H1 (cell line): ENCODE measurements at regions of chr2 and their contacts with region 1.

Region 1: DNA sequence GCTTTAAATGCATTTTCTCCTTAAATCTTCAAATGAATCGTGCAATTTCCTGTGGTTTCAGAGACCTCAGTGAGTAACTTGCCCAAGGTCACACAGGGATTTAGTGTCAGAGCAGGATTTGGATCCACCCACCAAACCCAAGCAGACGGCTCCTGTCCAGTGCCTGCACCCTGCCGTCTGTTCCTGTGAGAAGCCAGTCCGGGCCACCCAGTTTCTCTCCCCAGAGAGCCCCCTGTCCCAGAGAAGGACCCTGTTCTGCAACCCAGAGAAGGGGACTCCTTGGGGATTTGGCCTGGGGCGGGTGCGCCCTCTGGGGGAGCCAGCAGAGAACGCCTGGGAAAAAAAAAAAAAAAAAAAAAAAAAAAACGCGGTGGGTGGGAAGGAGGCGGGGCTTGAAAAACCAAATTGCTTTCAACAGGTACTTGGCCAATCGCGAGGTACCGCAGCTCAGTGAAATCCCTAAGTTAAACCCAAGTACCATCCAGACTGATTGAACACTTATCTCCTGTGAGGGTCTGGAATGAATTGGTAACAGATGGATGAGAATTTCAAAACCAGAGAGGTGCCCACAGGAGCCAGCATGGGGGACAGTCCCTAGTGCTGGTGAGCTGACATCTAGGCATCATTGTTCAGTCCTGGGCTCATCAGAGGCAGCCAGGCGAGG is 30.9 kb upstream of the REEP1 start:
- DNase-seq: peak; percentile 41 to 78
- H3K4me3 ChIP-seq: peak overlapping the region in 1 of 4 experiments; percentile 30; a peak in 1 of 8 replicates
- H3K27ac ChIP-seq: no peak overlapping the region
- H3K4me1 ChIP-seq: no peaks in the 10 kb centered on the region; a peak in 1 of 7 replicates
- H3K27me3 ChIP-seq: no peaks in the 10 kb centered on the region
- CTCF ChIP-seq: peak; percentile 43 to 68 (median 48)
- EP300 ChIP-seq: no peak
- POLR2A ChIP-seq: no peak
- RAD21 ChIP-seq: peak; percentile 81 to 84

Region 2: DNA sequence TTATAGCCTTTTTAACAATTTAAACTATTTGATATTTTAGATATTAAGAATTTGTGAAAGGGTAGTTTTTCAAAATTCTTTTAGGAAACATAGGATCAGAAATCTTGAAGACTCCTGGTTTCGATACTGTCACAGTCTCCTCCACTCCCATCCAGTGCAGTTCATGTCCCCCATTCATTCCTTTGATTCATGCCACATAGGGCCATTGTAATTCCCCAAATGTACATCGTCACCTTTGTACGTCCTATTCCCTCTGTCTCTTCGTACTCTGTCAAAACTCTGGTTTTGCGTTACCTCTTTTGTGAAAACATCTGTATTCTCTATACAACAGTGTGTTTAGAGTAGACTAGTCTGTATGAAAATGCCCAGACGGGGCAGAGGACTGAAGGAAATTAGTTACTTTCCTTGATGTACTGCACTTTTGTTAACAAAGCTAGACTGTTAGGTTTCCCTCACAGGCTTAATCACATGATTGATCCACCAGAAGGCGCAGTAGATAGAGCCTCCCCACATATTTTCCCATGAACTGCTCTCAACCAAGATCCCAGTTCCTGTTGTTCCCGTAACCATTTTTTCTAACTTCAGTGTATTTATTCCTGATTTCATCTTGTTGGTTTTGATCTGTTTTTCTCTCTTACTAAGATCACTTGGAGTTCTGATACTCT is 166.5 kb before region 1 on chr2:
- CTCF ChIA-PET with region 1: interaction called, 13 read pairs
- POLR2A ChIA-PET with region 1: no interaction called
- DNase-seq: no peak
- H3K4me3 ChIP-seq: peak overlapping the region in 1 of 4 experiments; percentile 10; a peak in 1 of 8 replicates
- H3K27ac ChIP-seq: no peak overlapping the region
- H3K4me1 ChIP-seq: peaks cover 0 to 6% (median 2%) of the 10 kb centered on the region in 4 experiments; a peak in 3 of 7 replicates
- H3K27me3 ChIP-seq: no peaks in the 10 kb centered on the region
- CTCF ChIP-seq: no peak
- EP300 ChIP-seq: no peak
- POLR2A ChIP-seq: no peak
- RAD21 ChIP-seq: no peak

Region 3: GRCh38 chr2:86213699-86214502 is 154.4 kb before region 1 on chr2:
- CTCF ChIA-PET with region 1: interaction called, 14 read pairs
- POLR2A ChIA-PET with region 1: no interaction called
- DNase-seq: no peak
- H3K4me3 ChIP-seq: no peak overlapping the region
- H3K27ac ChIP-seq: no peak overlapping the region
- H3K4me1 ChIP-seq: no peaks in the 10 kb centered on the region
- H3K27me3 ChIP-seq: peaks cover 0 to 1% (median 0%) of the 10 kb centered on the region in 4 experiments; a peak in 1 of 7 replicates
- CTCF ChIP-seq: no peak
- EP300 ChIP-seq: no peak
- POLR2A ChIP-seq: no peak
- RAD21 ChIP-seq: no peak

Region 4: DNA sequence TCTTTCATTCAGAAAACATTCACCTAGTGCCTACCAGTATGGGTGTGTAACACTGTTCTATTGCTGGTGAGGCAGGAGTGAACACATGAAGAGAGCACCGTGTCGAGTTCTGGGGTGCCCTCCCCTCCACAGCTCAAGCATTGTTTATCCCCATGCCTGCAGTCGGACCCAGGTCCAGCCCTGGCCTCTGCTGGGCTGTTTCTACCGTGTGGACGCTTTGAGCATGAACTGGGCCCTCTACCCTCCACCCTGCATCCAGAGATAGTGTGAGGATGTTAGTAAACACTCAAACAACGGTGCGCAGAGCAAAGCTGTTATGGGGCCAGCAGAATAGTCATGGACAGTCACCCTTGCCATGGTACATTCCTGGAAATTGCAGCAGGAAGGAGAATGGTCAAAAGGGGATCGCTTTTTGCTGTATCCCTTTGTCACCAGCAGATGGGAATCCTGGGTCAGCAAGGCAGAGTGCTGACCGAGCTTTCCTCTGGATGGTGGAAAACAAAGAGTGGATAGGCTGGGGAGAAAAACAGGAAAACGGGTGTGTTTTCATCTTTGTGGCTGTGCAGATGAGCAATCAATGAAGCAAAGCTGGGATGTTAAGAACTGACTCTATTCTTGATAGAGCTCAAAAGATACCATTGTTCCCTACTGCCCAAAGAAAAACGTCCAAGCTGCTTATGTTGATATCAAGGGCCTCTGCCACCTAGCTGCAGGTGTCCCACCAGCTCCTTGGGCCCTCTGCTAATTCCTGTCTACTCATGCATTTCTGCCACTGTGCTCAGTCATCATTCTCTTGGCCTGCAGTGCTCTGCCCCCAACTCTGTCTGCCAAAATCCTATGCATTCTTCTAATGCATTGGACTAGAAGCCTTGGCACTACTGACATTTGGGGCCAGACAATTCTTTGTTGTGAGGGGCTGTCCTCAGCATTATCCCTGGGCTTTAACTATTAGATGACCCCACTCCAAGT is 69.6 kb before region 1 on chr2:
- CTCF ChIA-PET with region 1: interaction called, 65 read pairs
- POLR2A ChIA-PET with region 1: no interaction called
- DNase-seq: no peak
- H3K4me3 ChIP-seq: no peak overlapping the region
- H3K27ac ChIP-seq: no peak overlapping the region
- H3K4me1 ChIP-seq: no peaks in the 10 kb centered on the region
- H3K27me3 ChIP-seq: no peaks in the 10 kb centered on the region
- CTCF ChIP-seq: peak; percentile 44 to 58 (median 57)
- EP300 ChIP-seq: no peak
- POLR2A ChIP-seq: no peak
- RAD21 ChIP-seq: peak; percentile 69 to 72

Region 5: DNA sequence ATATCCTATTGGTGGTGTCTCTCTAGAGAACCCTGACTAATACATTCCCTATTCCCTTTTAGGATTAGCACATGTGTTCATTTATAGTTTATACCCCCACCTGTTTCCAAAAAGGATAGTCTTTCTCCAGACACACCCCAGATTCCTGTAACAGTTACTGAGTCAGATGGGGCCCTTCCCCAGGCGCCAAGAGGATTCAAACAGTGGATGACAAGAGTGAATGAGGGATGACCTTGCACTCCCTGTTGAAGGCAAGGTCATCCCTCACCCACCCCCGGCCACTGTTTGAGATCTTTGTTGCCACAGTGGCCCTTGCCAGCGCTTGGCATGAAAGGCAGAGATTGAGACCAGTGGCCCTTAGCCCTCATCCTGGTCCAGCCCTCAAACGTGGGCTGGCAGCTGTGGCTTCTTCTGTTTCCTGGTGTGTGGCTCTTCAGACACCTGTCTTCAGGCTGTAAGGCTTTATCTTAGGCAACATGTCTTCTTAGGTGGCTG is 15.5 kb before region 1 on chr2:
- CTCF ChIA-PET with region 1: interaction called, 11 read pairs
- POLR2A ChIA-PET with region 1: no interaction called
- DNase-seq: peak in 1 of 2 experiments; percentile 34
- H3K4me3 ChIP-seq: no peak overlapping the region
- H3K27ac ChIP-seq: no peak overlapping the region
- H3K4me1 ChIP-seq: no peaks in the 10 kb centered on the region
- H3K27me3 ChIP-seq: no peaks in the 10 kb centered on the region
- CTCF ChIP-seq: no peak
- EP300 ChIP-seq: no peak
- POLR2A ChIP-seq: no peak
- RAD21 ChIP-seq: no peak

Region 6: DNA sequence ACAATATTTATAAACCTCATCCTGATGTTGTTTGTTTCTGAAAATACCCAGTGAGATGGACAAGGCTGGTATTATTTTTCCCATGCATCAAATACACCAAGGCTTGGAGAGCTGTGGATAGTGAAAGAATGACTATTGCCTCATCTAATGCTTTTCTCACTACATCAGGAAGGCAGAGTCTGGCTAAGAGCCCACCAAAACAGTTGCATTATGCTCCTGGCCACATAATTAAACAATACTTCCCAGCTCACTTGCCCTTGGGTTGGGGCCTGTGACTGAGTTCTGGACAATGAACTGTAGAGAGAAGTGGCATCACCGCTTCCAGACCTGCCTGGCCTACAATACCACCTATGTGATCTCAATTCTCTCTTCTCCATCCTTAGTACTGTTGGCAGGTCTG is 15.6 kb after region 1 on chr2:
- CTCF ChIA-PET with region 1: interaction called, 19 read pairs
- POLR2A ChIA-PET with region 1: no interaction called
- DNase-seq: no peak
- H3K4me3 ChIP-seq: no peak overlapping the region
- H3K27ac ChIP-seq: no peak overlapping the region
- H3K4me1 ChIP-seq: no peaks in the 10 kb centered on the region
- H3K27me3 ChIP-seq: no peaks in the 10 kb centered on the region
- CTCF ChIP-seq: no peak
- EP300 ChIP-seq: no peak
- POLR2A ChIP-seq: no peak
- RAD21 ChIP-seq: no peak